Sciatic nerve (tissue), 2 donors: ENCODE measurements at regions of chr16 and their contacts with region 1.

Region 1: DNA sequence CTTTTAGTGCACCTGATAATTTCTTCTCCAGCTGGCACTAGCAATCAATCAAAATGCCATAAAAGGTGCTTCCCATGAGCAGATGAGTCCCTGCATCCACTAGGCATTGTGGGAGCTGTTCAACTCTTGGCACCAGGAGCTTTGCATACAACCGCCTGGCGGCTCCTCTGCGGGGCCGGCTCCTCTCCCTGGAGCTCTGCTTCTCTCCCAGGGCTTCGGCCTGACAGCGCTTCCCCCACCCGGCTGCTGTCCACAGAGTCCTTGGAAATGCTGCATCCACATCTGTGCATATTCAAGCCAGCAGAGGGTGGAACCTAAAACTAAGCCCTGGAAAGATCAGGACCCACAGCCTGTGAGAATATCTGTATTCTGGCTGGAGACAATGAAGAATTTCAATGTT is 62.9 kb downstream of the LMF1 start:
- DNase-seq: no peak
- ATAC-seq: no peak

Region 2: DNA sequence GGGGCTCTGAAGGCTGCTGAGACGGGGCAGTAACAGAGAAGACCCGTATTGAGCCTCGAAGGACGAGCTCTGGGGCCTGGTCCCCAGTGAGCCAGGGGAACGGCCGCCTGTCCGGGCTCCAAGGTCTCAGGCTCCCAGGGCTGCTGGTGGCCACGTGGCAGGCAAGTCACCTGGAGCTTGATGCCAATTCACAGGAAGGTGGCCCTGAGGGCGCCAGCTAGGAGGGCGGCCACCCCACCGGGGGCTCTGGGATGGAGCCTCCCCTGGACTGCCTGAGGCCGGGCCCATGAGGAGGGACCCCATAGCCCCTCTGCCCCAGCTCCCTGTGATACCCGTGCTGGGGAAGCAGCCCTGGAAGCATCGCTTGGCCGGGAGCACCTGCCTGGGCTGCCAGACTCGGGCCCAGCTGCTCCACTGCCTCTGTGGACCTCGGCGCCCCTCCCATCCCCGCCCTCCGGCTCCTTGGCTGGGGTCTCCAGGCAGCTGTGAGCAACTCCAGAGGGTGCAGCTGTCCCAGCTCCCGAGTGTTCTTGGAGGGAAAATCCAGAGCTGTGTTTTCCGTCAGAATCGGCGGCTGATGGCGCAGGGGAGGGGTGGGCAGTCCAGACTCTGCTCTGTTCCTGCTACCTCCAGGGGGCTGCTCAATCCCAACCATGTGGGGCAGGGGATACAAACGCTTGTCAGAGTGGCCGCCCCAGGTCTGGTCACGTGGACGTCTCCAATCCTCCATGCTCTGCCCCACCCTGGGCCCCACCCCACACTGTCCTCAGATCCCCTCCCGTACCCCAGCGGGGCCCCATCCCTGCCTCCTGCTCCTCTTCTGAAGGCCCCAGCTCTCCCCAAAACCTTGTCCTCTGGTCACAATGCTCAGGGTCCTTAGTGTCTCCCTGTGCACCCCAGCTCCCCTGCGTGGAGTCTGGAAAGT is 40.1 kb before region 1 on chr16:
- intact Hi-C with region 1: loop called (anchors 2 kb)
- DNase-seq: no peak
- ATAC-seq: no peak

Region 3: DNA sequence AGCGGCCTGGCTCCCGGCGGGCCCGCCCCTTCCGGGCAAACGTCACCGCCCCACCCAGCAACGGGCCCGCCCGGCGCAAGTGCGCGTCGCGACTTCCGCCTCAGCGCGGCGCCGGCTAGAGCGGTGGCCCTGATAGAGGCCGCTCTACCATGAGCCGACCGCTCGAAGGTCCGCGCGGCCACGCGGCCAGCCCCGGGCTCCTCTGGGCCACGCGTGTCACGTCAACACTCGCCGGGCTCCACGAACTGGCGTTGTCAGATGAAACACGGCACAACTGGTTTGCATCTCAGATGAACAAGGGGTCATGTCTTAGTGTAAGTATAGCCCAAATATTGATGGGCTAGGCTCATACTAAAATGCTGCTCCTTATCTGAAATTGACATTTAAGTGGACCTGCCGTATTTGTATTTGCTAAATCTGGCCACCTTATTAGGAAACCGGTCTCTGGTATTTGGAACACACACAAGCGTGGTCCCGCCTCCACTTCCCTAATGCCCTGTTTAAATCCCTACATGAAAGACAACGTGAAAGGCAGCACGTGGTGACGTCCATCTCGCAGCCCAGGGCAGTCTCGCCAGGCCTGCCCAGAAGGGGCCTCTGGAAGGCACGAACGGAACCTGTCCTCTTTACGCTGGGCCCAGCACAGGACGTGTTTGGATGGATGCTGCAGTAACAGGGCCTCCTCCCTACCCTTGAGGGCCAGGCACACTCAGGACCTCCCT is 1102.1 kb after region 1 on chr16 and contains the start of gene ZNF598:
- intact Hi-C with region 1: no loop called
- DNase-seq: peak; percentile 89
- ATAC-seq: peak; percentile 95
- total RNA-seq, gene ZNF598: 34.5 TPM